ENCODE measurements at regions of chr1 and their contacts with region 1.

Region 1: GRCh38 chr1:26993237-26994019 is at the start of gene TRNP1:
- DNase-seq: no peak
- H3K4me3 ChIP-seq: peak within 1 kb of the TSS; percentile 70
- H3K27me3 ChIP-seq: no peaks in the 10 kb centered on the region
- CTCF ChIP-seq: no peak
- polyA plus RNA-seq, gene TRNP1: 68.9 and 75.4 TPM in 2 replicates

Region 2: DNA sequence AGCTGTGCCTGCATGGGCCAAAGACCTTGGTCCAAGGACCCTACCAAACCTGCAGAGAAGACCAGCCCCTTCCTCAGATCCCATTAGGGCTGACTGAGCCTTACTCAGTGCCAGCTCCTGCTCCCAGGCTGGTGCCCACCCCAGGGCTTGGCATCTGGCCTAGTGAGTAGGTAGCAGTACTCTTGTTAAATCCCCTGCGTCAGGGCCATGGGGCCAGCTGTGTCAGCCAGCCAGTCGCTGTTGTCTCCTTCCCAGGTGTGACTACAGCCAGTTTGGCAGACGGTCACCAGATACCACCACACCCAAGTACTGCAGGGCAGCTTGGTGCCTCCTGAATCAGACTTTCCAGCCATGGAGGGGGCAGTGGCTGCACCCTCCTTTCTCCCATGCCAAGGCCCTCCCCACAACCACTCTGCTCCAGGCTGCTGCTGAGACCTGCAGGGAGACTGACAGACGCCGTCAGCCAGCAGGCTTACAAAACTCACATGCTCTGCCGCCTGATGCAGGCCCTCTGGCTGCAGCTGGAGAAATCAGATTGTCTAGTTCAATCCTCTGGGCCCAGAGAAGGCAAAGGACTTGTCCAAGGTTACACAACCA is 16.3 kb after region 1 on chr1:
- CTCF ChIA-PET with region 1: interaction called, 10 read pairs
- POLR2A ChIA-PET with region 1: interaction called, 3 read pairs
- DNase-seq: no peak
- H3K4me3 ChIP-seq: no peak overlapping the region
- H3K27me3 ChIP-seq: no peaks in the 10 kb centered on the region
- CTCF ChIP-seq: no peak

Region 3: DNA sequence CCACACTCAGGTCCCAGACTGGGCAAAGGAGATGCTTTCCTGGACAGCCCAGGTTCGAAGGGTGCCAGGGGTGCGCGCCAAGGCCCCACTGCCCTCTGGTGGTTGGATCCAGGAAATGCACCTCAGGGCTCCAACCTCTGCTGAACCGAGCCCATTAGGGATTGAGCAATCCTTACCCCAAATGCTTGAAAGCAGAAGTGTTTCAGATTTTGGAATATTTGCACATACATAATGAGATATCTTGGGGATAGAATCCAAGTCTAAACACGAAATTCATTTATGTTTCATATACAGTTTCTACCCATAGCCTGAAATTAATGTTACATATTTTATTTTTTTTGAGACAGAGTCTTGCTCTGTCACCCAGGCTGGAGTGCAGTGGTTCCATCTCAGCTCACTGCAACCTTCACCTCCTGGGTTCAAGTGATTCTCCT is 104.1 kb after region 1 on chr1:
- CTCF ChIA-PET with region 1: interaction called, 97 read pairs
- POLR2A ChIA-PET with region 1: no interaction called
- DNase-seq: no peak
- H3K4me3 ChIP-seq: no peak overlapping the region
- H3K27me3 ChIP-seq: no peaks in the 10 kb centered on the region
- CTCF ChIP-seq: peak; percentile 96